ENCODE measurements at regions of chr5 and their contacts with region 1.

Region 1: GRCh38 chr5:142699184-142699720 is 13.4 kb upstream of the FGF1 start:
- DNase-seq: peak; percentile 76
- H3K4me3 ChIP-seq: no peak overlapping the region
- H3K27ac ChIP-seq: no peak overlapping the region
- H3K27me3 ChIP-seq: no peaks in the 10 kb centered on the region
- CTCF ChIP-seq: peak; percentile 97

Region 2: GRCh38 chr5:142548739-142549275 is 150.4 kb before region 1 on chr5:
- CTCF ChIA-PET with region 1: interaction called, 19 read pairs
- POLR2A ChIA-PET with region 1: no interaction called
- DNase-seq: peak; percentile 91
- H3K4me3 ChIP-seq: no peak overlapping the region
- H3K27ac ChIP-seq: no peak overlapping the region
- H3K27me3 ChIP-seq: no peaks in the 10 kb centered on the region
- CTCF ChIP-seq: peak; percentile 97

Region 3: DNA sequence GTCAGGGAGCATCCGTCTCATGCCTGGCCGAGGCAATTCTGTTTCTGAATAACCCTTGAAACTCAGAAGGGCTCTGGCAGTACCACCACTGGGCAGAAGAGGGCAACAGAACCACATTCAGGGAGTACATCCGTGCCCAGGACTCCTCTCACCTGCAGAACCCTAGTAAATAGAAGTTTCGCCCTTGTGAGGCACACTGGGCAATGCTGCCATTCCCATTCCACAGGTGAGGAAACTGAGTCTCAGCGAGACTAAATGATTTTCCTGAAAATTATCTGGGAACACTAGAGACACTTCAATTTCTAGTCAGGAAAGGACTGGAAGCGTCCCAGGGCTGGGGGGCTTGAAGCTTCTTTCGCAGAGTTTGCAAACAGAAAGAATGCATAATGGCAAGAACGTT is 88.1 kb before region 1 on chr5:
- CTCF ChIA-PET with region 1: interaction called, 75 read pairs
- POLR2A ChIA-PET with region 1: no interaction called
- DNase-seq: peak; percentile 30
- H3K4me3 ChIP-seq: no peak overlapping the region
- H3K27ac ChIP-seq: no peak overlapping the region
- H3K27me3 ChIP-seq: no peaks in the 10 kb centered on the region
- CTCF ChIP-seq: peak; percentile 92

Region 4: GRCh38 chr5:142644640-142645361 is 54.5 kb before region 1 on chr5:
- CTCF ChIA-PET with region 1: interaction called, 14 read pairs
- POLR2A ChIA-PET with region 1: interaction called, 4 read pairs
- DNase-seq: peak; percentile 96
- H3K4me3 ChIP-seq: peak overlapping the region; percentile 49
- H3K27ac ChIP-seq: peak overlapping the region; percentile 97
- H3K27me3 ChIP-seq: no peaks in the 10 kb centered on the region
- CTCF ChIP-seq: no peak

Region 5: DNA sequence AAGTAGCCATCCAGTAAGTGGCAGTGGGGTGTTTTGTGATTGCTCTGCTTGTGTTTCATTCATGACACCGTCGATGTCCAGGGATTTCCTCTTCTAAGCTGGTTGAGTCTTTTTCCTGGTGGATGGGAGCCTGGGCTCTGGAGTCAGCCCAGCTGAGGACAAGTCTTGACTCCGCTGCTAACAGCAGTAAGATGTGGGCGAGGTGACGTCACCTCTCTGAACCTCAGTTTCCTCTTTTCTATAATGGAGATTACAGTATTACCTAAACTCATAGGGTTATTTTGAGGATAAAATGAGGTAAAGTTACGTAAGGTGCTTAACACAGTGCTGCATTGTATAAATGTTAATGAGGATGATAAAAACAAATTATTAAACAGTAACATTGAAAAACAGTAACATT is 34.6 kb before region 1 on chr5:
- CTCF ChIA-PET with region 1: interaction called, 45 read pairs
- POLR2A ChIA-PET with region 1: no interaction called
- DNase-seq: no peak
- H3K4me3 ChIP-seq: no peak overlapping the region
- H3K27ac ChIP-seq: no peak overlapping the region
- H3K27me3 ChIP-seq: no peaks in the 10 kb centered on the region
- CTCF ChIP-seq: no peak